Upper lobe of right lung (tissue), 1 donor: ENCODE measurements at regions of chr4 and their contacts with region 1.

Region 1: DNA sequence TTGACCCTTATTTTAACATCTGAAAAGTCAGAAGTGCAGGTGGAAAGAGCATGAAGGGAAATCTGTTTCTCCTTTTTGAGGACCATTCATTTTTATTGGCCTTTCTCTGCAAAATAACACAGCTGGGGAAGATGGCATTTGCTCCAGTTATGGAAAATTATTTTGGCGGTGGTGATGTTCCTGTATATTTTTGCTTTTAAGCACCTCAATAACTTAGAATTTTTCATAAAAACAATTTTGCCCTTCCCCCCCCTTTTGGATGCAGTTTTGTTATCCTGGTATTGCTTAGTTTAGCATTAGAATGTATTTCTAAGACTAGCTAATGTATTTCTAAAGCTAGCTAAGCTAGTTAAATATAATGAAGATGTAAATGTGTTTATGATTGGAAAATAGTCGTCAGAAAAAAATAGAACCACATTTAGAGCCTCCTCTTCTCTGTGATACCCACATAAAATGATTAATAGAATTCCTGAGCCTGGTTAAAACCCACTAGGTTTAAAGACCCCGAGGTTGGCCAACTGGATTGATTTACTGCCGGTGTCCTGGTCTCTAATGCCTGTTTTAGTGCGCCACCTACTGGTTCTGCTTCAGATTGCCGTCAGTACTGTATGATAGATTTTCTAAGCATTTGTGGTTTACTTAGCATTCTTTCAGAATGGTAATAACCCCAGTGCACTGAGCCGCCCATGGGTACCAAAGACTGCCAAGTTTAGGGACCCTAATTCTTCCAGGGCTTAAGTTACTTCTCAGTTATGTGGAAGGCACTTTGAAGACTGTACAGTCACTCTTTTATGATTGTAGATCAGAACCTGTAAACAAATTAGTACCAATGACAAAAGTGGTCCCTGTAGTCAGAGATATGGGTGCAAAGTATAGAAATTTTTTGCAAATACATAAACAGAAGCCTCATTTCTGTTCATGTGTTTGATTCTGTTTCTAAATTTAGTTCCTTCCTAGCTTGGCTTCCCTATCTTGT is 11.4 kb downstream of the KLF3 start:
- DNase-seq: no peak
- ATAC-seq: peak; percentile 64
- H3K4me3 ChIP-seq: no peak overlapping the region
- H3K27ac ChIP-seq: peak overlapping the region; percentile 85
- H3K4me1 ChIP-seq: peaks cover 78% of the 10 kb centered on the region
- H3K27me3 ChIP-seq: no peaks in the 10 kb centered on the region
- CTCF ChIP-seq: peak; percentile 95

Region 2: DNA sequence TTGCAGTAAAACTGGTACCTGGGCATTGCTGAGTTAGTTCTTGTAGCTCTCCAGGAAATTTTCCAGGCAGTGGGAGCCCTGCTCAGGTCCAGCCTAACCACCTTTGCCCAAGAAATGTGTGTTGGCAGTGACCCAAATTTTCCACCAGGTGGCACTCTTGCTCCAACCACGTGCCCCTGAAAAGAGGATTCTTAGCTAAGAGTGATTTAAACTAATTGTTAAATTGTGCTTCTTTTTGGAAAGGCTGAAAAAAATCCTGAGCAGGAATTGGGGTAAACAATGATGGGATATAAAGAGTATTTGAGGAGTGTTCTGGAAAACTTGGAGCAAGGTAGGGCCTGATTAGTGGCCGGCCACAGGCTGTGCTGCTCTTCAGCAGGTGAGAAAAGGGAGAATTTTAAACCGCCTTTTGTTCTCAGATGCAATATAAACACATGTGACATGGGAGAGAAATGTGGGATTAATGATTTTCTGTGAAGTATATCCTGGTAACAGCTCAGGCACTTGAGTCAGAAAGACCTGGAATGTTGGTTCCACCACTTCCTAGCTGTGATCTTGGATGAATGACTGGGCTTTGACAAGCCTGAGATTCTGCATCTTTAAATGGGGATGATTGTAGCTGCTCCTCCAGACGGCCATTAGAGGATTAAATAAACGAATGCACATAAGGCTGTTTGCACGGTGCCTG is 495.6 kb before region 1 on chr4:
- intact Hi-C with region 1: loop called (anchors 5 kb)
- DNase-seq: peak; percentile 68
- ATAC-seq: peak; percentile 83
- H3K4me3 ChIP-seq: no peak overlapping the region
- H3K27ac ChIP-seq: no peak overlapping the region
- H3K4me1 ChIP-seq: peaks cover 31% of the 10 kb centered on the region
- H3K27me3 ChIP-seq: no peaks in the 10 kb centered on the region
- CTCF ChIP-seq: peak; percentile 92

Region 3: GRCh38 chr4:38319456-38320342 is 355.7 kb before region 1 on chr4:
- intact Hi-C with region 1: loop called (anchors 5 kb)
- DNase-seq: peak; percentile 96
- ATAC-seq: peak; percentile 95
- H3K4me3 ChIP-seq: peak overlapping the region; percentile 34
- H3K27ac ChIP-seq: peak overlapping the region; percentile 81
- H3K4me1 ChIP-seq: peaks cover 20% of the 10 kb centered on the region
- H3K27me3 ChIP-seq: no peaks in the 10 kb centered on the region
- CTCF ChIP-seq: peak; percentile 99

Region 4: DNA sequence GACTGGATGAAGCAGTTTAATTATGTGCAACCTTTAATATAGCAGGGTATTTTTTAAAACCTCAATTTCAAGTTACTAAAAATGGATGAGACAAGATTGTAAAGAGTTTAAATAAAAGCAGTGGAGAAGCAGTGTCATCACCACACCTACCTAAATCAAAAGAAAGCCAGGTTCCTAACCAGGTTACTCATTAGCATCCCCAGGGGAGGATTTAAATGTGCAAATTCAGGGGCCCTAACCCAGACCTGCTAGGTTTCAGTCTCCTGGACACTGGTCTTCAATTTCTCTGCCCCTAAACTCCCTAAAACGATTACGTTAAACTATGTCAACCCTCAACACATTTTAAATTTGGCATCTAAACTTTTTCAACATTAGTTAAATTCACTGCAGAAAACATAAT is 128.4 kb before region 1 on chr4:
- intact Hi-C with region 1: no loop called
- DNase-seq: no peak
- ATAC-seq: no peak
- H3K4me3 ChIP-seq: no peak overlapping the region
- H3K27ac ChIP-seq: no peak overlapping the region
- H3K4me1 ChIP-seq: no peaks in the 10 kb centered on the region
- H3K27me3 ChIP-seq: no peaks in the 10 kb centered on the region
- CTCF ChIP-seq: no peak